ENCODE measurements at regions of chr19 and their contacts with region 1.

Region 1: DNA sequence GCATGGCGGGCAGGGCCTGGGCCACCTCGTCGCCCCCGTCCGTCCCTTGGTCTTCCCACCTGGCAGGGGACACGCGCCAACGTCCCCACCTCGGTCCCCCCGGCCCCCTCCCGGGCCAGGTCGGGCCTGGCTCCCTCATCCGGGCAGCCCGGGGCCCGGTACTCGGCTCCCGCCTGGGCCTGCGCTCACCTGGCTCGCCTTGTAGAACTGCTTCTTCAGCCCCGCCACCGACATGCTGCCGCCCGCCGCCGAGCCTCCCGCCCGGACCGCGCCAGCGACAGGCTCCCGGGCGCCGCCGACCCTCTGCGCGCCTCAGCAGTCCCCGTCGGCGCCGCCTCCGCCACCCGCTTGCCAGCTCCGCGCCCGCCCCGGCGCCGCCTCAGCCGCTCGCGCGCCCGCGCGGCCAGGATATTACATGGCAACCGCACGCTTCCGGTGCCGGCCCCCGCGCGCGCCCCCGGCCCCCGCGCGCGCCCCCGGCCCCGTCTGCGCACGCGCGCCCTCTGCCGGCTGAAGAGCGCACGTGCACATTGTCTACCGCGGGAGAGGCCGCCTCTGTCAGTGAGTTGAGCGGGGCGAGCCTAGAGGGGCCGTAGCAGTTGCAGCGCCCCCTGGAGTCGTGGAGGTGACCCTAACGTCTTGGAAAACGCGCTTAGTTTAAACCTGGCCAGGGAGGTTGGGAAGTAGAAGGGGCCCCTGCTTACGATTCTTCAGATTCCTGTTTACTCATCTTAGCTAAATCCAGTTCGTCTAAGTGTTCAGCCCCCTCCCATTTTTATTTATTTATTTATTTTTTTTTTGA is at the start of gene SH3GL1:
- DNase-seq: peak; percentile 93
- ATAC-seq: peak; percentile 71
- H3K4me3 Mint-ChIP-seq: peak within 1 kb of the TSS; percentile 95
- H3K27ac Mint-ChIP-seq: peak within 1 kb of the TSS; percentile 97
- H3K4me1 Mint-ChIP-seq: peaks cover 52% of the 10 kb centered on the region
- H3K27me3 Mint-ChIP-seq: no peaks in the 10 kb centered on the region
- CTCF ChIP-seq: peak; percentile 89
- total RNA-seq, gene SH3GL1: 53.1 to 59.2 TPM

Region 2: GRCh38 chr19:4362861-4363510 is 37.4 kb before region 1 on chr19:
- CTCF ChIA-PET with region 1: interaction called, 5 read pairs
- POLR2A ChIA-PET with region 1: interaction called, 4 read pairs
- intact Hi-C with region 1: loop called (anchors 5 kb)
- DNase-seq: no peak
- ATAC-seq: peak; percentile 13
- H3K4me3 Mint-ChIP-seq: no peak overlapping the region
- H3K27ac Mint-ChIP-seq: peak overlapping the region; percentile 15
- H3K4me1 Mint-ChIP-seq: peaks cover 4% of the 10 kb centered on the region
- H3K27me3 Mint-ChIP-seq: no peaks in the 10 kb centered on the region
- CTCF ChIP-seq: peak; percentile 25

Region 3: GRCh38 chr19:4369888-4370260 is 30.5 kb before region 1 on chr19:
- CTCF ChIA-PET with region 1: interaction called, 14 read pairs
- POLR2A ChIA-PET with region 1: interaction called, 12 read pairs
- intact Hi-C with region 1: no loop called
- DNase-seq: peak; percentile 90
- ATAC-seq: peak; percentile 68
- H3K4me3 Mint-ChIP-seq: peak overlapping the region; percentile 60
- H3K27ac Mint-ChIP-seq: peak overlapping the region; percentile 89
- H3K4me1 Mint-ChIP-seq: peaks cover 42% of the 10 kb centered on the region
- H3K27me3 Mint-ChIP-seq: no peaks in the 10 kb centered on the region
- CTCF ChIP-seq: peak; percentile 62

Region 4: GRCh38 chr19:4379355-4380253 is 20.7 kb before region 1 on chr19:
- CTCF ChIA-PET with region 1: interaction called, 15 read pairs
- POLR2A ChIA-PET with region 1: interaction called, 7 read pairs
- intact Hi-C with region 1: no loop called
- DNase-seq: peak; percentile 82
- ATAC-seq: peak; percentile 78
- H3K4me3 Mint-ChIP-seq: peak overlapping the region; percentile 71
- H3K27ac Mint-ChIP-seq: peak overlapping the region; percentile 87
- H3K4me1 Mint-ChIP-seq: peaks cover 60% of the 10 kb centered on the region
- H3K27me3 Mint-ChIP-seq: no peaks in the 10 kb centered on the region
- CTCF ChIP-seq: no peak

Region 5: GRCh38 chr19:4389583-4390566 is 10.5 kb before region 1 on chr19:
- CTCF ChIA-PET with region 1: interaction called, 13 read pairs
- POLR2A ChIA-PET with region 1: interaction called, 4 read pairs
- intact Hi-C with region 1: no loop called
- DNase-seq: no peak
- ATAC-seq: no peak
- H3K4me3 Mint-ChIP-seq: no peak overlapping the region
- H3K27ac Mint-ChIP-seq: peak overlapping the region; percentile 88
- H3K4me1 Mint-ChIP-seq: peaks cover 39% of the 10 kb centered on the region
- H3K27me3 Mint-ChIP-seq: no peaks in the 10 kb centered on the region
- CTCF ChIP-seq: no peak

Region 6: GRCh38 chr19:4415352-4415751 is 15.0 kb after region 1 on chr19:
- CTCF ChIA-PET with region 1: interaction called, 3 read pairs
- POLR2A ChIA-PET with region 1: interaction called, 24 read pairs
- intact Hi-C with region 1: no loop called
- DNase-seq: no peak
- ATAC-seq: no peak
- H3K4me3 Mint-ChIP-seq: no peak overlapping the region
- H3K27ac Mint-ChIP-seq: no peak overlapping the region
- H3K4me1 Mint-ChIP-seq: peaks cover 4% of the 10 kb centered on the region
- H3K27me3 Mint-ChIP-seq: no peaks in the 10 kb centered on the region
- CTCF ChIP-seq: no peak

Region 7: DNA sequence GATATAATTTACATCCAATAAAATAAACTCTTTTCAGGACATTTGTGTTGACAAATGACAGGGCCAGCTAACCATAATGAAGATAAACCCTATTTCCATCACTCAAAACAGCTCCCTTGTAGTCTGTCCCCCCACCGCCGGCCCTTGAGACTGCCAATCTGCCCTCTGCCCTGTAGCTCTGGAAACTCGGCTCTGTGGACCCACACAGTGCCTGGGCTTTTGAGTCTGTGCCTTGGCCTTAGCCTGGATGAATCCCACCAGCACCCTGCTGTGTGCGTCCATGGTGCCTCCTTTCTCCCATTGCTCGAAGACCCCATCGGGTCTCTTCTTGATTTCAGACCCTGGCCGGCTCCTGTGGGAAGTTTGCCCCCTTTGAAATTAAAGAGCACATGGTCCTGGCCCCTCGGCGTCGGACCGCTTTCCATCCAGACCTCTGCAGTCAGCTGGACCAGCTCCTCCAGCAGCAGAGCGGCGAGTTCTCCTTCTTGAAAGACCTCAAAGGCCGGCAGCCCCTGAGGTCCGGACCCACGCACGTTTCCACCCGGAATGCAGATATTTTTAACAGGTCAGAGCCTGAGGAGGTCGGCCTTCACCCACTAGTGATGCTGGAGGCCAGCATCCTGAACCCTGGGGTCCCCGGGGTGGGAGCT is 28.1 kb after region 1 on chr19:
- CTCF ChIA-PET with region 1: no interaction called
- POLR2A ChIA-PET with region 1: no interaction called
- intact Hi-C with region 1: no loop called
- DNase-seq: no peak
- ATAC-seq: no peak
- H3K4me3 Mint-ChIP-seq: no peak overlapping the region
- H3K27ac Mint-ChIP-seq: no peak overlapping the region
- H3K4me1 Mint-ChIP-seq: no peaks in the 10 kb centered on the region
- H3K27me3 Mint-ChIP-seq: no peaks in the 10 kb centered on the region
- CTCF ChIP-seq: no peak